Activated CD4-positive, alpha-beta T cell treated with anti-CD3 and anti-CD28 coated beads, Interleukin-2, amount 10 ng/mL, durations not matched to agents 24 days and 14 days (primary cell): ENCODE measurements at regions of chr4 and their contacts with region 1.

Region 1: DNA sequence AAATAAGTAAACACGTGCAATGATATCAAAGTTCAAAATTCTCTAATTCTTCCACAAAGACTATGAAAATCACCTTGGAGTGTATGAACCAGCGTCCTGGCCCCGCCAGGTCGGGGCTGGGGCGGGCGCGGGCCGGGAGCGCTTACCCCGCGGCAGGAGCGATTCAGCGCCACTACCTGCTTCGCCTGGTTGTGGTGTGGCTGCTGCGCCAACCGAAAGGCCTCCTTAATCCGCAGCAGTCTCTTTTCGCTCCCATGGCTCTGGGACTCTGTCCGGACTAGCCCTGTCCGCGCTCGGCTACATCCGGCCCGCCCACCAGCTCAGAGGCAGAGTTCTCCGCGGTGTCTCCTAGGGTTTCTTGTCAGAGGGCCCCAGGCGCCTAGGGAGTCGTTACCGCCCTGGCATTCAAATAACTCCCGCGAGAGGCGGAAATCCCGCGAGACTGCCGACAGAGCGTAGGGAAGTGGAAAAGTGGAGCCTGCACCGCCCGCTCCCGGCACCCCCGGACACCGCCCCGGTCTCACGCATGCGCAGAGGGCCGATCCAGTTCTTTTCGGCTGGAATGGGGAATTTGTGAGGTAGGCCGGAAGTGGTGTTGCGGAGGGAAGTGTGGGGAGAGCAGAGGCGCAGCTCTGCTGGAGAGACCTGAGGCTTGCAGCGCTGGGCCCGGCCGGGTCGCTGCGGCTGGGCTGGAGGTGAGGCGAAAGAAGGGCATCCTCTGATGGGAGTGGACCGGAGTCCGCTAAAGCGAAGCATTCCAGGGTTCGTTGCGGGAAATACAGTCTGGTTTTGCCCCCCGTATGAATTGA is at the start of gene FAM200B:
- DNase-seq: peak; percentile 100
- H3K4me3 Mint-ChIP-seq: peak within 1 kb of the TSS; percentile 100
- H3K27ac Mint-ChIP-seq: peak within 1 kb of the TSS; percentile 99
- H3K4me1 Mint-ChIP-seq: peaks cover 40% of the 10 kb centered on the region
- H3K27me3 Mint-ChIP-seq: no peaks in the 10 kb centered on the region
- total RNA-seq, gene FAM200B: 6.0 and 9.9 TPM in 2 replicates

Region 2: GRCh38 chr4:15702941-15703403 is 21.6 kb after region 1 on chr4 and contains the start of gene BST1:
- intact Hi-C with region 1: loop called (anchors 1 kb)
- DNase-seq: peak; percentile 87
- H3K4me3 Mint-ChIP-seq: peak within 1 kb of the TSS; percentile 90
- H3K27ac Mint-ChIP-seq: peak within 1 kb of the TSS; percentile 38
- H3K4me1 Mint-ChIP-seq: peaks cover 11% of the 10 kb centered on the region
- H3K27me3 Mint-ChIP-seq: peaks cover 28% of the 10 kb centered on the region
- total RNA-seq, gene BST1: 0.12 and 0.72 TPM in 2 replicates

Region 3: GRCh38 chr4:15738877-15739276 is 57.5 kb after region 1 on chr4:
- intact Hi-C with region 1: loop called (anchors 5 kb)
- DNase-seq: no peak
- H3K4me3 Mint-ChIP-seq: peak overlapping the region; percentile 27
- H3K27ac Mint-ChIP-seq: peak overlapping the region; percentile 77
- H3K4me1 Mint-ChIP-seq: peaks cover 40% of the 10 kb centered on the region
- H3K27me3 Mint-ChIP-seq: no peaks in the 10 kb centered on the region

Region 4: GRCh38 chr4:16225863-16226815 is 544.7 kb after region 1 on chr4 and contains the start of gene TAPT1:
- intact Hi-C with region 1: loop called (anchors 1 kb)
- DNase-seq: peak; percentile 94
- H3K4me3 Mint-ChIP-seq: peak within 1 kb of the TSS; percentile 90
- H3K27ac Mint-ChIP-seq: peak within 1 kb of the TSS; percentile 98
- H3K4me1 Mint-ChIP-seq: peaks cover 45% of the 10 kb centered on the region
- H3K27me3 Mint-ChIP-seq: no peaks in the 10 kb centered on the region
- total RNA-seq, gene TAPT1: 27.2 and 29.3 TPM in 2 replicates